ENCODE measurements at regions of chr18 and their contacts with region 1.

Region 1: DNA sequence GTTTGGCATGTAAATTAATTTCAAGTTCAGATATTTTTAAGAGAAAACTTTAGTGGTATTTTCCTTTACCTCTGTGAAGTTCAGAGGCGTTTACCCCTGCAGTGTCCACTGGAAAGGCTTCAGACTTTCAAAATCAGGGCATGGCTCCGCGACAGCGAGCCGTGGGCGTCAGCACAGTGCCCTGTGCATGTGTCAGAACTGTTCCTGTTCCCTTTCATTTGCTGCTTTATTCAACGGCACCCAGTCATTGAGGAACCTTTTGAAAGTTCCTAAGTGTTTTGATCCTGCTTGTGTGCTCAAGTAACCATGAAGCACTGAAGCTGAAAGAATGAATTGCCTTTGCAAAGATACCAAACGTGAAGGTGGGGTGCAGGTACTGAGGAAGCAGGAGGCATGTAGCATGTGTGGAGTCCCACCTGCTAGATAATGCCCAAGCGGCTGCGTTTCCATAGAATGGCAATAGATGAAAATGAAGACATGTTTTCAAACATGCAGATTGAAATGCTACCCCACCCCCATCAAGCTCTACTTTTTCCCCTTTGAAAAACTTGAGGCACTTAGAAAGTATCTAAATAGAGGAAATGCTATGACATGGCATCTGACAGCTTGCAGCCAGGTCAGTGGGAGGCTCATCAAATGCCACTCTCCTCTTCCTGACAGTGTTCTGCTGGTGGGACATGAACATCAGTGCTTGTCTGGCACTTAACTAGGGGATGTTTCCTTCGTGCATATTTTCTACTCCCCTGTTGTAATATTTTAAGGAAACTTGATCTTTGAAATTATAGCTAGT is 148.6 kb downstream of the ZNF236 start:
- DNase-seq: no peak
- ATAC-seq: no peak
- H3K4me3 ChIP-seq: no peak overlapping the region
- H3K27ac ChIP-seq: no peak overlapping the region
- H3K4me1 ChIP-seq: no peaks in the 10 kb centered on the region
- H3K27me3 ChIP-seq: no peaks in the 10 kb centered on the region
- CTCF ChIP-seq: no peak
- POLR2A ChIP-seq: no peak

Region 2: GRCh38 chr18:76797311-76797710 is 173.7 kb before region 1 on chr18:
- in situ Hi-C with region 1: loop called in 2 of 4 experiments (anchors 5 to 25 kb)
- intact Hi-C with region 1: no loop called
- DNase-seq: no peak
- ATAC-seq: no peak
- H3K4me3 ChIP-seq: no peak overlapping the region
- H3K27ac ChIP-seq: no peak overlapping the region
- H3K4me1 ChIP-seq: peaks cover 5 to 6% of the 10 kb centered on the region in 2 donors
- H3K27me3 ChIP-seq: peaks cover 0 to 5% (median 2%) of the 10 kb centered on the region in 3 donors
- CTCF ChIP-seq: no peak
- POLR2A ChIP-seq: no peak

Region 3: GRCh38 chr18:76881744-76882143 is 89.2 kb before region 1 on chr18:
- in situ Hi-C with region 1: no loop called
- intact Hi-C with region 1: no loop called
- DNase-seq: no peak
- ATAC-seq: no peak
- H3K4me3 ChIP-seq: no peak overlapping the region
- H3K27ac ChIP-seq: no peak overlapping the region
- H3K4me1 ChIP-seq: no peaks in the 10 kb centered on the region
- H3K27me3 ChIP-seq: no peaks in the 10 kb centered on the region
- CTCF ChIP-seq: no peak
- POLR2A ChIP-seq: no peak

Region 4: DNA sequence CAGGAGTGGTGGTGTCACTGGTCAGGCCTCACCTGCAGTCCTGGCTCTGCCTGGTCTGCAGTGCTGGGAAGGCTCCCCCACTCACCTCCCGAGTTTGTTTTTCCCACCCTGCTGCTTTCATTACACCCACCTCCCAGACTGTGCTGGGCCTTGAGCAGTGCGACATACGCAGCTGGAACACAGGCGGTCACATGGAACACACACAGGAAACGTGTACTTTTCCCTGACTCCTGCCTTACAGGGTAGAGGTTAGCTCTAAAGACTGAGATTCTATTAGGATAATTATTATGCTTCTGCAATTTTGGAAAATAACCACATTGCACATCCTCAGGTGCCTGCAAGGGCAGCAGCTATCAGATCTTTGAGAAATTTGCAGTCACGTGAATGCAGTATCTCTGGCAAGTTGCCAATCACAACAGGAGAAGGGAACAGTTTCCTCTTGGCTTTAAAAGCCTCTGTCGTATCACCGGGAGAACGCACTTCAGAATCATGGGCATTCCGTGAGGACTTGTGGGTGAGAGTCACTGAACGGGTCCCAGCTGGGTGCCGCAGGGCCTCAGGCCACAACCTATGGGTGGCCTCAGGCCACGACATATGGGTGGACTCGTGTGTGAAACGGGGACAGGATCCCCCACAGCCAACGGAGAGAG is 12.1 kb before region 1 on chr18:
- in situ Hi-C with region 1: no loop called
- intact Hi-C with region 1: loop called (anchors 2 kb)
- DNase-seq: no peak
- ATAC-seq: no peak
- H3K4me3 ChIP-seq: no peak overlapping the region
- H3K27ac ChIP-seq: no peak overlapping the region
- H3K4me1 ChIP-seq: no peaks in the 10 kb centered on the region
- H3K27me3 ChIP-seq: no peaks in the 10 kb centered on the region
- CTCF ChIP-seq: no peak
- POLR2A ChIP-seq: no peak